ENCODE measurements at regions of chr21 and their contacts with region 1.

Region 1: GRCh38 chr21:35316933-35317332 is 267.8 kb upstream of the RUNX1 start:
- DNase-seq: no peak
- H3K4me3 ChIP-seq: no peak overlapping the region
- H3K27ac ChIP-seq: no peak overlapping the region
- H3K4me1 ChIP-seq: no peaks in the 10 kb centered on the region
- H3K27me3 ChIP-seq: no peaks in the 10 kb centered on the region
- CTCF ChIP-seq: no peak
- POLR2A ChIP-seq: no peak

Region 2: GRCh38 chr21:35204850-35205541 is 111.9 kb before region 1 on chr21:
- intact Hi-C with region 1: loop called (anchors 5 kb)
- DNase-seq: peak; percentile 21
- H3K4me3 ChIP-seq: no peak overlapping the region
- H3K27ac ChIP-seq: peak overlapping the region; percentile 29 to 59
- H3K4me1 ChIP-seq: no peaks in the 10 kb centered on the region
- H3K27me3 ChIP-seq: no peaks in the 10 kb centered on the region
- CTCF ChIP-seq: no peak
- POLR2A ChIP-seq: no peak

Region 3: GRCh38 chr21:36052860-36053714 is 736.2 kb after region 1 on chr21:
- intact Hi-C with region 1: no loop called
- DNase-seq: peak; percentile 69
- H3K4me3 ChIP-seq: no peak overlapping the region
- H3K27ac ChIP-seq: no peak overlapping the region
- H3K4me1 ChIP-seq: no peaks in the 10 kb centered on the region
- H3K27me3 ChIP-seq: no peaks in the 10 kb centered on the region
- CTCF ChIP-seq: no peak
- POLR2A ChIP-seq: no peak

Region 4: GRCh38 chr21:36260030-36260787 is 943.3 kb after region 1 on chr21:
- intact Hi-C with region 1: no loop called
- DNase-seq: peak; percentile 50
- H3K4me3 ChIP-seq: peak overlapping the region; percentile 20 to 25
- H3K27ac ChIP-seq: peak overlapping the region; percentile 77 to 78
- H3K4me1 ChIP-seq: no peaks in the 10 kb centered on the region
- H3K27me3 ChIP-seq: no peaks in the 10 kb centered on the region
- CTCF ChIP-seq: peak; percentile 68 to 79 (median 74)
- POLR2A ChIP-seq: no peak

Measured in prostate gland (tissue), 2 donors.